Endothelial cell of umbilical vein (primary cell): ENCODE measurements at regions of chr2 and their contacts with region 1.

Region 1: DNA sequence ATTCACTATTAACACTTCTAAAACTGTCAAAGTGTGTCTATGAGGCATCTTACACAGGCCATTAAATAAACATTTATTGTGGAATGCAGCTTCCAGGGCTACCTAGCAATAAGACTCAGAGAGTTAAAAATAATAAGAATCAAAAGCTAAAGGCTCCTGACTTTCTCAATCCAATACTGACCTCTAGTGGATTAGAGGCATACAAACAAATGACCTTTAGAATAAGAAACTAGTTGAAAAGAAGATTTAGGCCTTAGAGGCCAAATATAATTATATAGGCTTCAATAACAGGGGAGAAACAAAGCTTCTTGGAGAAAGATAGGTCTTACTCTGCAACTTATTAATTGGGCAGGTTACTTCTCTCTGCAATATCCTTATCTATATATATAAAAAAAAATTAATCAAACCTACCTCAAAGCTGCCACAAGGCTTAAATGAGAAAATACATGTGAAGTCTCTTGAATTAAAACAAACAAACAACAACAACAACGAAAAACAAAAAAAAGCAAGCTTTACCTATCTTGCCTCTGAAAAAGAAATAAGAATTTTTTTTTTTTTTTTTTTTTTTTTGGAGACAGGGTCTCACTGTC is 246.1 kb downstream of the EXOC6B start:
- DNase-seq: peak; percentile 69
- H3K4me3 ChIP-seq: no peak overlapping the region
- H3K27ac ChIP-seq: no peak overlapping the region
- H3K4me1 ChIP-seq: no peaks in the 10 kb centered on the region
- H3K27me3 ChIP-seq: no peaks in the 10 kb centered on the region
- CTCF ChIP-seq: peak; percentile 36 to 44
- POLR2A ChIP-seq: no peak

Region 2: DNA sequence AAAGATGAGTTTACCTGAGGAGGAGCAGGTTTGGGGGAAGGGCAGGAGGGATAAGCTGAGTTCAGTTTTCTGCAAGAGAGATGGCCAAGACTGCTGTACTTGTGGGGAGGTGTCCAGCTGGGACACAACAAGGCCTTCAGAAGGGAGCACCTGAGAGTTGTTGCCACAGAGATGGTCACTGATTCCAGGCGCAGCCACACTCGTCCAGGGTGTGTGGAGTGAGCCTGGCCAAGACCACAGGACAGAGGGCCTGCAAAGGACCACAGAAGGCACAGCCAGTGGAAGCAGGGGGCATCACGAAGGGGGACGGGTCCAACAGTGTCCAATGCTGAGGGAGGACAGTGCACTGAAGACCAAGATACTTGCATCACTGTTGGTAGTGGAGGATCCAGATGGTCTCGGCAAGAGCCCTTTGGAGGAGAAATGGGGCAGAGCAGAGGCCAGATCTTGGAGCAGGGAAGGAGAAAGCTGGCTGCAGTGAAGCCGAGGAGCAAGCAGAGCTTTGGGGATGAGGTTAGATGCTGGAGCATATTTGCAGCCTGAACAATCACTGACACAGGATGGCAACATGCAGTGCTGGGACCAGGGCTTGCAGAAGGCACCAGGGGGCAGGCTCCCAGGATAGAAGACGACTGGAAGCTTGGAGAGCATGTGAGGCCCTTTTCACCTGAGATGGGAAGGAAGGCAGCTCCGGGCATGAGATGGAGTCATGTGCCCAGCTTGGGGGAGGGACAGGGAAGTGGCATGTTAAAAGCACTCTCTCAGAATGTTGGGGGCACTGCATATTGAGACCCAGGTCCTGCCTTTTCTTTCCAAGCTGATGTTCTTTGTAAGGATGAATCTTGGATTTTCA is 646.0 kb before region 1 on chr2:
- CTCF ChIA-PET with region 1: interaction called, 17 read pairs
- POLR2A ChIA-PET with region 1: no interaction called
- dilution Hi-C with region 1: no loop called
- intact Hi-C with region 1: no loop called
- DNase-seq: no peak
- H3K4me3 ChIP-seq: no peak overlapping the region
- H3K27ac ChIP-seq: no peak overlapping the region
- H3K4me1 ChIP-seq: no peaks in the 10 kb centered on the region
- H3K27me3 ChIP-seq: peaks cover 0 to 2% of the 10 kb centered on the region in 2 experiments
- CTCF ChIP-seq: peak in 1 of 2 donors; percentile 21
- POLR2A ChIP-seq: no peak

Region 3: GRCh38 chr2:72155737-72156136 is 423.9 kb before region 1 on chr2:
- CTCF ChIA-PET with region 1: interaction called, 106 read pairs
- POLR2A ChIA-PET with region 1: no interaction called
- dilution Hi-C with region 1: no loop called
- intact Hi-C with region 1: loop called (anchors 1 kb)
- DNase-seq: no peak
- H3K4me3 ChIP-seq: no peak overlapping the region
- H3K27ac ChIP-seq: no peak overlapping the region
- H3K4me1 ChIP-seq: no peaks in the 10 kb centered on the region
- H3K27me3 ChIP-seq: peaks cover 21 to 26% of the 10 kb centered on the region in 2 experiments
- CTCF ChIP-seq: no peak
- POLR2A ChIP-seq: no peak

Region 4: GRCh38 chr2:72325592-72326422 is 253.9 kb before region 1 on chr2:
- CTCF ChIA-PET with region 1: interaction called, 8 read pairs
- POLR2A ChIA-PET with region 1: no interaction called
- dilution Hi-C with region 1: no loop called
- intact Hi-C with region 1: loop called (anchors 10 kb)
- DNase-seq: peak; percentile 36
- H3K4me3 ChIP-seq: no peak overlapping the region
- H3K27ac ChIP-seq: no peak overlapping the region
- H3K4me1 ChIP-seq: no peaks in the 10 kb centered on the region
- H3K27me3 ChIP-seq: no peaks in the 10 kb centered on the region
- CTCF ChIP-seq: peak; percentile 53 to 70
- POLR2A ChIP-seq: no peak

Region 5: DNA sequence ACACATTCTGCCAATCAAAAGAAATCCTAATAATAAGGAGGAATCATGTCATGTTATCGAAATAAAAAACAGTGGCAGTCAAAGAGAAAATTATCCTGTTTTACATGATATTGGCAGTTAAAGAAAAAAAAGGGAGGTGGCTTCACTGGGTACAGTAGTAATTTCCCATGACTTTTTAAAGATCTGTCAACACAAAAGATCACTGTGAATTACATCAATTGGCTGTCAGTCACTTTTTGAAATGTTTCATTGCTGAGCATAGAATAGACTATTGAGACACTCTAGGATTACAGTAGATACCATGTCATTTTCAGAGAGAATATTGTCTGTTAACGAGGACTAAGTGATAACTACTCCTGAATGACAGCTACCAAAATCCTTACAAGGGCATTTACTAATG is 96.3 kb before region 1 on chr2:
- CTCF ChIA-PET with region 1: no interaction called
- POLR2A ChIA-PET with region 1: no interaction called
- dilution Hi-C with region 1: no loop called
- intact Hi-C with region 1: no loop called
- DNase-seq: no peak
- H3K4me3 ChIP-seq: no peak overlapping the region
- H3K27ac ChIP-seq: no peak overlapping the region
- H3K4me1 ChIP-seq: no peaks in the 10 kb centered on the region
- H3K27me3 ChIP-seq: no peaks in the 10 kb centered on the region
- CTCF ChIP-seq: no peak
- POLR2A ChIP-seq: no peak

Region 6: DNA sequence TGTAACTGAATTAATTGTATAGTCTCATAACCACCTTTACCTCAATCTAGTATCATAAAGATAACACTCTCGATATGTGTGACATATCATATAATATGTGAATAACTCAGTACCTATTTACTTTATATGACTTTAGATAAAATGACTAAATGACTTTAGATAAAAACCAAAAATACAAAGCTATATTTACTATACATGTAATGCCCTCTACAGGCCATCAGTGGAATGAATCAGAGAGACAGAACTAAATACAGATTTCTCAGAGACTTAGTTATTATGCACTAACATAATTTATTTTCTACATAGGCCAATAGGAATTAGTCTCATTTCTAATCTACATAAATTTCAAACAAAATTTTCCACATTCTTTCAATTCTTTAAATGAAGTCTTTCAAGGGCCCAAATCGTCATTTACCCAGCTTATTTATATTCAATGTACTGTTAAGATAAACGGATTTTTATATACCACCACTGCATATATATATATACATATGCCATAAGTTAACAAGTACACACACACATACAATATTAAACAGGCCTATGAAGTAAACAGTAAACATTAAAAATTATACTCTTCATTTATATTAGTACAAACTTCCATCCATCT is 26.3 kb after region 1 on chr2:
- CTCF ChIA-PET with region 1: interaction called, 12 read pairs
- POLR2A ChIA-PET with region 1: no interaction called
- dilution Hi-C with region 1: no loop called
- intact Hi-C with region 1: no loop called
- DNase-seq: peak; percentile 43
- H3K4me3 ChIP-seq: no peak overlapping the region
- H3K27ac ChIP-seq: no peak overlapping the region
- H3K4me1 ChIP-seq: no peaks in the 10 kb centered on the region
- H3K27me3 ChIP-seq: no peaks in the 10 kb centered on the region
- CTCF ChIP-seq: peak; percentile 38 to 43
- POLR2A ChIP-seq: no peak

Region 7: GRCh38 chr2:72625366-72625765 is 45.7 kb after region 1 on chr2:
- CTCF ChIA-PET with region 1: no interaction called
- POLR2A ChIA-PET with region 1: no interaction called
- dilution Hi-C with region 1: no loop called
- intact Hi-C with region 1: no loop called
- DNase-seq: no peak
- H3K4me3 ChIP-seq: no peak overlapping the region
- H3K27ac ChIP-seq: no peak overlapping the region
- H3K4me1 ChIP-seq: peaks cover 2% of the 10 kb centered on the region
- H3K27me3 ChIP-seq: no peaks in the 10 kb centered on the region
- CTCF ChIP-seq: no peak
- POLR2A ChIP-seq: no peak

Region 8: GRCh38 chr2:72793798-72794440 is 214.2 kb after region 1 on chr2:
- CTCF ChIA-PET with region 1: no interaction called
- POLR2A ChIA-PET with region 1: no interaction called
- dilution Hi-C with region 1: no loop called
- intact Hi-C with region 1: no loop called
- DNase-seq: peak; percentile 21
- H3K4me3 ChIP-seq: no peak overlapping the region
- H3K27ac ChIP-seq: no peak overlapping the region
- H3K4me1 ChIP-seq: peaks cover 13% of the 10 kb centered on the region
- H3K27me3 ChIP-seq: no peaks in the 10 kb centered on the region
- CTCF ChIP-seq: no peak
- POLR2A ChIP-seq: no peak